Right ventricle myocardium inferior (tissue), 1 donor: ENCODE measurements at regions of chr3 and their contacts with region 1.

Region 1: DNA sequence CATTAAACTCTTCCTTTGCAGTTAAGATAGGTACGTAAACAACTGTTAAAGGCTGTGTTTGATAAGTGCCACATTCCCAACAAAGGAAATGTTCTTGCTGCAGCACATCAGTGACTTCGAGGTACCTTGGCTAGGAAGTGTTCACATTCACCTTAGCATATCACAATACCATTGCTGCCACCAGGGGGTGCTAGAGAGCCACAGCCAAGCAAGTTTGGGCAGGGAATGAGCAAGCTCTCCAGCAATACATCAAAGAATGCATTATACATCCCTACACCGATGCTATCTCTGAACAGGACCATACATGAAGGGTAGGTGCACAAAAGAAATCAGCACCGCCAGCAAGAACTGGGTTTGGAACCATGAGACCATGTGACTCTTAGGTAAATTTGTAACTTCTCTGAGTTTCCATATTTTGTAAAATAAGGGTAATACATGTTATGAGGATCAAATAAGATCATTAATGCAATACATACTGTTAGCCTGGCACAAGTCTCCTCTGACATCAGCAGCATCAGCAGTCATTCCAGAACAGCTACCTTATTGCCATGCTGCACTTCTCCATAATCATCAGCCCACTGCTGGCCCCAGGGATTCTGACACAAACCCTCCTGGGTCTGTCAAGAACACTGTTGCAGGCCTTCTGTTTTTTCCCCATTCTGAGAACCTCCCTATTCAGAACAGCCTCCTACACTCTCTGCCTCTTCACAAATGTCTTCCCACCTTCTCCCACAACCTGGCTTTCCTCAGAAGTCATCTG is 37.6 kb downstream of the RYK start:
- DNase-seq: peak; percentile 87
- ATAC-seq: peak; percentile 81

Region 2: DNA sequence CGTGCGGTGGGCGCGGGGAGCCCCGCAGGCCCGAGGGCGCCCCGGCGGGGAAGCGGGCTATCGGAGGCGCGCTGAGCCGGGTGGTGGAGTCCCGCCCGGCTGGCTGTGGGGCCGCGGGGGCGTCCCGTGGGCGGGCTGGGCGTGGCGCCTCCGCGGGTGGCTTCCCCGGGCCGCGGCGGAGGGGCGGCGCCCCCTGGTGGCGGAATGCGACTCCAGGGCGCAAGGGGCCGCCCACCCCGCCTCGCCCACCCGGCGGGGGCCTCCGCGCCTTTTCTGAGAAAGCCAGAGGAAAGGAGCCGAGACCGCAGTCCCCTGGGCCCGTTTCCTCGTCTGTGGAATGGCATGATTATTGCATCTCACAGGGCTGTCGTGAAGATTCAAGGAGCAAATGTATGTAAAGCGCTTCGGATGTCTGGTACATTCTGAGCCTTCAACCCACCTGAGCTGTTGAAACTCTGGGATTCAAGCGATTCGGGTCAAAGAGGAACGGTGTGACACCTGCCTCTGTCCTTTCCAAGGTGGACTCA is 285.5 kb before region 1 on chr3:
- intact Hi-C with region 1: loop called (anchors 5 kb)
- DNase-seq: no peak
- ATAC-seq: peak; percentile 87

Region 3: DNA sequence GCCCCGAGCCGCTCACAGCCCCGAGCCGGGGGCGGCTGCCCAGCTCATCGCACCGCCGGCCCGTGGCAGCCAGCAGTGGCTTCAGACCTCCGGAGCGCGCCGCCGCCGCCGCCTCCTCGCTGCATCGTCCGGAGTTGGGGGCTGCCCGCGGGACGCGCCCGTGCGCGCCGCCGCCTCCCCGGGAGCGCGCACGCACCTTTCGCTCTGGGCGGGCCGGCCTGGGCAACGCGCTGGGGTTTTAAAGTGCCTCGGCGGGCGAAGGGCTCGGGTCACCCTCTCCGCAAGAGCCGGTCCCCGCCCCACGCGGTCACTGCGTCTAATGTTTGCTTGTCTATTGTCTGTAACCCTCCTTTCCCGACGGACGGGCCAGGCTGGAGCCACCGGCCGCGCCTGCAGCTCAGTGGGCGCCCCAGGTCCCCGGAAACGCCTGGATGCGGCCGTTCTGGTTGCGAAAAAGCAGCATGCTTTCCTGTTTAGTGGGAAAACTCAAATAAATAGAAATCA is 37.7 kb after region 1 on chr3 and contains the start of gene RYK:
- intact Hi-C with region 1: loop called (anchors 5 kb)
- DNase-seq: peak; percentile 92
- ATAC-seq: peak; percentile 96
- total RNA-seq, gene RYK: 40.6 TPM

Region 4: GRCh38 chr3:134299185-134299887 is 86.2 kb after region 1 on chr3:
- intact Hi-C with region 1: loop called (anchors 1 kb)
- DNase-seq: no peak
- ATAC-seq: no peak

Region 5: GRCh38 chr3:134373994-134374790 is 161.1 kb after region 1 on chr3 and contains the start of gene AMOTL2:
- intact Hi-C with region 1: loop called (anchors 5 kb)
- DNase-seq: peak; percentile 91
- ATAC-seq: peak; percentile 84
- total RNA-seq, gene AMOTL2: 61.9 TPM

Region 6: DNA sequence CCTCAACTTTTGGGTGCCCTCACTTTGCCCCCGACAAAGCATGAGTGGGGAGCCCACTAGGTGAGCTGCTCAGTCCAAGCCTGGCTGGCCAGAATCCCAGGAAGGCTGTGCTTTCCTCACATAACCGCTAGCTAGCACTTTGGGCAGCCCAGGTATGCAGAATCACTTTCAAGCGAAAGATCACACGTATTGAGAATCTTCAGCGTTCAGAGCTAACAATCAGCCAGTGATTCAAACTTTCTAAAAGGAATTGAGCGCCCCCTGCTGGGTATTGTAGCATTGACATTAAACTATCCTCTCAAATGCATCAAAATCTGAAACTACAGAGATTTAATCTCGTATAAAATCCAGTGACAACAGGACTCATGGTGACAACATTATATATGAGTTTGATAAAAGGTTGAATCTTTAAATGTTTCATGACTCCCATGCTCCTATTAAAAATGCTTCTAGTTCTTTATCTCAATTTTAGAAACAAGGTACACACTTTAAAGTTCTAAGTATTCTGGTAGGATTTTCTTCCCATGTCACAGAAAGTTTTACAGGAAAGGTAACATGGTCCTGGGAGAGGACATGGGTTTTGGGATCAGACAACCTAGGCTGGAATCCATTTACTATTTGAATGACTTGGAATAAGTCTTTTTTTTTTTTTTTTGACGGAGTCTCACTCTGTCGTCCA is 260.9 kb after region 1 on chr3:
- intact Hi-C with region 1: loop called (anchors 5 kb)
- DNase-seq: peak; percentile 45
- ATAC-seq: peak; percentile 33